Activated T-helper 2 cell treated with anti-CD3 and anti-CD28 coated beads, Interferon-gamma antibody, Interleukin-2, Interleukin-4, amounts not matched to agents 10 μg/mL and 5 μg/mL and 100 μg/mL, durations not matched to agents 14 hours and 24 hours and 36 hours (primary cell): ENCODE measurements at regions of chr14 and their contacts with region 1.

Region 1: GRCh38 chr14:68734231-68734775 is 58.6 kb downstream of the ZFP36L1 start:
- DNase-seq: no peak
- H3K4me3 Mint-ChIP-seq: peak overlapping the region; percentile 9
- H3K27ac Mint-ChIP-seq: peak overlapping the region; percentile 63
- H3K4me1 Mint-ChIP-seq: peaks cover 53% of the 10 kb centered on the region
- H3K27me3 Mint-ChIP-seq: no peaks in the 10 kb centered on the region

Region 2: DNA sequence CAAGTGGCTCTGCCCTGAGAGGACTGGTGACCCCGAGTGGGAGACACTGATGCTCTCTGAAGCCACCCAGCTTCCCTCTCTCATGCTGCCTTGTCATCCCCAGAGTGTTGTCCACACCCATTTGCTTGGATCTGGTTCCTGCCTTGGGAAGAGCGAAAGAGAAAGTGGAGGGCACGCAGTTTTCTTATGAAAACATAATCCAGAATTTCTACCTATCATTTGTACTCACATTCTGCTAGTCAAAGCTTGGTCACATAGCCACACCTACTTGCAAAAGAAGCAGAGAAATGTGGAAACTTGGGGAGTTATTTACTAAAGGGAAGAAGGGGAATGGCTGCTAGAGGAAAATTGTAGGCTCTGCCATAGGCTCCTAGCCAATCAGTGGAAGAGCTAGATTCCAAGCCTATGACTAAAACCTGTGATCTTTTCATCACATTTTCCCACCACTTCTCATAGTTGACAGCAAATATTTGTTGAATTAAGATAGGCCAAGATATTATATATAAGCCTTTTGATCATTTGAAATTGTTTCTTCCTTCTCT is 267.7 kb before region 1 on chr14:
- intact Hi-C with region 1: loop called (anchors 2 kb)
- DNase-seq: no peak
- H3K4me3 Mint-ChIP-seq: no peak overlapping the region
- H3K27ac Mint-ChIP-seq: no peak overlapping the region
- H3K4me1 Mint-ChIP-seq: peaks cover 39% of the 10 kb centered on the region
- H3K27me3 Mint-ChIP-seq: no peaks in the 10 kb centered on the region

Region 3: GRCh38 chr14:68671909-68672308 is 62.4 kb before region 1 on chr14:
- intact Hi-C with region 1: no loop called
- DNase-seq: no peak
- H3K4me3 Mint-ChIP-seq: no peak overlapping the region
- H3K27ac Mint-ChIP-seq: no peak overlapping the region
- H3K4me1 Mint-ChIP-seq: peaks cover under 1% of the 10 kb centered on the region
- H3K27me3 Mint-ChIP-seq: no peaks in the 10 kb centered on the region

Region 4: GRCh38 chr14:68703093-68703492 is 31.2 kb before region 1 on chr14:
- intact Hi-C with region 1: no loop called
- DNase-seq: no peak
- H3K4me3 Mint-ChIP-seq: no peak overlapping the region
- H3K27ac Mint-ChIP-seq: no peak overlapping the region
- H3K4me1 Mint-ChIP-seq: peaks cover 10% of the 10 kb centered on the region
- H3K27me3 Mint-ChIP-seq: no peaks in the 10 kb centered on the region

Region 5: GRCh38 chr14:68718023-68718995 is 16.0 kb before region 1 on chr14:
- intact Hi-C with region 1: loop called (anchors 1 kb)
- DNase-seq: no peak
- H3K4me3 Mint-ChIP-seq: no peak overlapping the region
- H3K27ac Mint-ChIP-seq: no peak overlapping the region
- H3K4me1 Mint-ChIP-seq: peaks cover 31% of the 10 kb centered on the region
- H3K27me3 Mint-ChIP-seq: no peaks in the 10 kb centered on the region

Region 6: DNA sequence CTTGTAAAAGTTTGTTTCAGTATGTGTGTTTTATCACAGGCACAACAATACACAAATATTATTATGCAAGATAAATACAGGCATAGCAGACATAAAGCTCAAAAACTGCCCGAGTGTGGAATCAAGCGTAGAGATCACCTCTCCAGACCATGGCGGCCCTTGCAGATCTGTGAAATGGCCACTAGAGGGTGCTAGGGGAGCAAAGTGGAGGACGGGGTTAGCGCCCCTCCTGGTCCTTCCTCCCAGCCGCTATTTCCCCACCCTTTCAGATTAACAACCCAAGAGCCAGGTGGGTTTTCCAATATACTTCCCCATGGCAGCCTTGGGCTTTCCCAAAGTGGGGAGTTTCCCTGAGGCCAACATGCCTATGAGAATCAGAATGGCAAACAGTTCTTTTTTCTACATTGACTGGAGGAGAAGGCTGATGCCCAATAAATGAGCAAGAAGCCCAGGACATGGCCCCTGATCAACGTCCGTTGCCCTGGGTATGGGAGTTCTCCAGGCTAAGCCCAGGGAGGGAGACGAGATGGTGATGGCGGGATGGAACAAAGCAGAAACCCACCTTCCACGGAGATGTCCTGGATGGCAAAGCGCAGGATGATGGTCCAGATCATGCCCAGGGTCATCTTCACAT is 177.4 kb after region 1 on chr14:
- intact Hi-C with region 1: no loop called
- DNase-seq: peak; percentile 60
- H3K4me3 Mint-ChIP-seq: no peak overlapping the region
- H3K27ac Mint-ChIP-seq: no peak overlapping the region
- H3K4me1 Mint-ChIP-seq: peaks cover 19% of the 10 kb centered on the region
- H3K27me3 Mint-ChIP-seq: no peaks in the 10 kb centered on the region

Region 7: GRCh38 chr14:68961781-68962584 is 227.7 kb after region 1 on chr14:
- intact Hi-C with region 1: no loop called
- DNase-seq: no peak
- H3K4me3 Mint-ChIP-seq: no peak overlapping the region
- H3K27ac Mint-ChIP-seq: no peak overlapping the region
- H3K4me1 Mint-ChIP-seq: peaks cover 17% of the 10 kb centered on the region
- H3K27me3 Mint-ChIP-seq: no peaks in the 10 kb centered on the region